ENCODE measurements at regions of chr2 and their contacts with region 1.

Region 1: GRCh38 chr2:196068271-196069209 is at the start of gene DNAH7:
- DNase-seq: peak; percentile 80
- ATAC-seq: peak; percentile 96
- H3K4me3 ChIP-seq: peak within 1 kb of the TSS; percentile 81
- H3K27ac ChIP-seq: peak within 1 kb of the TSS; percentile 38
- H3K4me1 ChIP-seq: no peaks in the 10 kb centered on the region
- H3K27me3 ChIP-seq: no peaks in the 10 kb centered on the region
- CTCF ChIP-seq: peak; percentile 27; the same call in 1 of the 2 replicates
- POLR2A ChIP-seq: peak; percentile 47; the same call in 1 of the 2 replicates
- RAD21 ChIP-seq: peak; percentile 14; the same call in 1 of the 2 replicates
- total RNA-seq, gene DNAH7: 0.28 and 0.36 TPM in 2 replicates

Region 2: GRCh38 chr2:194545978-194546377 is 1522.6 kb before region 1 on chr2:
- CTCF ChIA-PET with region 1: interaction called, 3 read pairs
- POLR2A ChIA-PET with region 1: no interaction called
- dilution Hi-C with region 1: no loop called
- in situ Hi-C with region 1: no loop called
- intact Hi-C with region 1: loop called (anchors 5 kb)
- DNase-seq: no peak
- ATAC-seq: no peak
- H3K4me3 ChIP-seq: no peak overlapping the region
- H3K27ac ChIP-seq: no peak overlapping the region
- H3K4me1 ChIP-seq: no peaks in the 10 kb centered on the region
- H3K27me3 ChIP-seq: no peaks in the 10 kb centered on the region
- CTCF ChIP-seq: 0 out of 2 replicates have a peak, but pooled peaks have one; percentile 10
- POLR2A ChIP-seq: no peak
- RAD21 ChIP-seq: no peak

Region 3: DNA sequence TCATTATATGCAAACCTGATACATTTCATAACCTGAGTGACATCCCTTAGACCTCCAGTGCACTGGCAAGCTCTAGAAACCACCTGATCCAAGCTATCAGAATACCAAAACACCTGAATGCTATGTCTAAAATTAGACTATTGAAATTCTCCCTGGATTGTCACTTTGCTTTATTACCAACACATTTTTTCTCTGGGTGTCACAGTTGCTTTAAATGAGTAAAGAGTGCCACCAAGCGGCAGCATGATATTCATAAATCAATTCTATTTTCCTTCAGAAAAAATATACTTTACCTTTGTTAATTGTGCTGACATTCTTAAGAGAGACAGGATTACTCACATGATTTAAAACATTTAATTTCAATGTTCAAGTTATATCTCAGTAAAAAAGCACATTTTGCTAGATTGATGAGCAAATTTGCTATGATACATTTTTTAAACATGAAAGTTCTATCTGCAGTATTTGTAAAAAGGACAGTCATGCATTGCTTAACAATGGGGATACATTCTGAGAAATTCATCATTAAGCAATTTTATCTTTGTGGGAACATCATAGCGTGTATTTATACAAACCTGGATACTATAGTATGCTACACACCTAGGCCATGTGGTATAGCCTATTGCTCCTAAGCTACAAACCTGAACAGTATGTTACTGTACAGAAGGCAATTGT is 750.0 kb before region 1 on chr2:
- CTCF ChIA-PET with region 1: no interaction called
- POLR2A ChIA-PET with region 1: no interaction called
- dilution Hi-C with region 1: no loop called
- in situ Hi-C with region 1: no loop called
- intact Hi-C with region 1: loop called (anchors 2 kb)
- DNase-seq: peak; percentile 37
- ATAC-seq: peak; percentile 52
- H3K4me3 ChIP-seq: no peak overlapping the region
- H3K27ac ChIP-seq: no peak overlapping the region
- H3K4me1 ChIP-seq: peaks cover 4% of the 10 kb centered on the region
- H3K27me3 ChIP-seq: no peaks in the 10 kb centered on the region
- CTCF ChIP-seq: peak; percentile 74
- POLR2A ChIP-seq: no peak
- RAD21 ChIP-seq: peak; percentile 75

Region 4: GRCh38 chr2:195520671-195521155 is 547.8 kb before region 1 on chr2:
- CTCF ChIA-PET with region 1: no interaction called
- POLR2A ChIA-PET with region 1: no interaction called
- dilution Hi-C with region 1: no loop called
- in situ Hi-C with region 1: loop called (anchors 25 kb)
- intact Hi-C with region 1: no loop called
- DNase-seq: peak; percentile 99
- ATAC-seq: peak; percentile 98
- H3K4me3 ChIP-seq: no peak overlapping the region
- H3K27ac ChIP-seq: peak overlapping the region; percentile 72
- H3K4me1 ChIP-seq: peaks cover 9% of the 10 kb centered on the region
- H3K27me3 ChIP-seq: no peaks in the 10 kb centered on the region
- CTCF ChIP-seq: no peak; the same call in 1 of the 2 replicates
- POLR2A ChIP-seq: no peak
- RAD21 ChIP-seq: peak; percentile 19

Region 5: GRCh38 chr2:195612611-195613495 is 455.7 kb before region 1 on chr2:
- CTCF ChIA-PET with region 1: no interaction called
- POLR2A ChIA-PET with region 1: no interaction called
- dilution Hi-C with region 1: no loop called
- in situ Hi-C with region 1: no loop called
- intact Hi-C with region 1: loop called (anchors 2 kb)
- DNase-seq: peak; percentile 82
- ATAC-seq: peak; percentile 90
- H3K4me3 ChIP-seq: peak overlapping the region; percentile 49; the same call in 1 of the 2 replicates
- H3K27ac ChIP-seq: peak overlapping the region; percentile 89
- H3K4me1 ChIP-seq: peaks cover 11% of the 10 kb centered on the region
- H3K27me3 ChIP-seq: no peaks in the 10 kb centered on the region
- CTCF ChIP-seq: no peak
- POLR2A ChIP-seq: peak; percentile 67; the same call in 1 of the 2 replicates
- RAD21 ChIP-seq: peak; percentile 10; the same call in 1 of the 2 replicates

Region 6: GRCh38 chr2:195664528-195664927 is 404.0 kb before region 1 on chr2:
- CTCF ChIA-PET with region 1: interaction called, 4 read pairs
- POLR2A ChIA-PET with region 1: no interaction called
- dilution Hi-C with region 1: no loop called
- in situ Hi-C with region 1: loop called (anchors 5 kb)
- intact Hi-C with region 1: loop called (anchors 1 kb)
- DNase-seq: peak; percentile 41
- ATAC-seq: no peak
- H3K4me3 ChIP-seq: no peak overlapping the region
- H3K27ac ChIP-seq: no peak overlapping the region
- H3K4me1 ChIP-seq: peaks cover 8% of the 10 kb centered on the region
- H3K27me3 ChIP-seq: no peaks in the 10 kb centered on the region
- CTCF ChIP-seq: peak; percentile 57
- POLR2A ChIP-seq: no peak
- RAD21 ChIP-seq: peak; percentile 59

Region 7: DNA sequence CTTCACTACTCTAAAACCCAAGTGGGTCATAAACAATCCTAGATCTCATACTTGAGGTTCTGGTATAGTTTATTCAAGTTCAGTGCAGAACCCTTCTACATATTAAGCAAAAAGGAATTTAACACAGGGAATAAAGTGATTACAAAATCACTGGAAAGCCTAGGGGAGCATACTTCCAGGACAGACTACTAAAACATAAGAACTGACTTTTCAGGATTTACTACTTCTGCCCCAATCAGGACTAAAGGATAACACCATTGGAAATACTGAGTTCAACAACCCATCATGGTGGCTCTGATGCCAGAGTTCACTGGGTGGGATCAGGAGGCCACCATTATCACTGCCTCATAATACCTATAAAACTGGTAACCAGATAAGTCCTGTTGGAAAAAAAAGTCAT is 123.5 kb before region 1 on chr2:
- CTCF ChIA-PET with region 1: interaction called, 3 read pairs
- POLR2A ChIA-PET with region 1: no interaction called
- dilution Hi-C with region 1: no loop called
- in situ Hi-C with region 1: no loop called
- intact Hi-C with region 1: loop called (anchors 10 kb)
- DNase-seq: no peak
- ATAC-seq: peak; percentile 27; the same call in 1 of the 2 replicates
- H3K4me3 ChIP-seq: no peak overlapping the region
- H3K27ac ChIP-seq: no peak overlapping the region
- H3K4me1 ChIP-seq: no peaks in the 10 kb centered on the region
- H3K27me3 ChIP-seq: no peaks in the 10 kb centered on the region; the same call in 1 of the 2 replicates
- CTCF ChIP-seq: no peak
- POLR2A ChIP-seq: no peak
- RAD21 ChIP-seq: no peak